Panc1 (cell line): ENCODE measurements at regions of chr7 and their contacts with region 1.

Region 1: GRCh38 chr7:69561266-69562000 is 36.8 kb upstream of the AUTS2 start:
- DNase-seq: no peak
- ATAC-seq: no peak
- H3K4me3 ChIP-seq: no peak overlapping the region
- H3K27ac ChIP-seq: no peak overlapping the region
- H3K4me1 ChIP-seq: no peaks in the 10 kb centered on the region
- H3K27me3 ChIP-seq: no peaks in the 10 kb centered on the region
- CTCF ChIP-seq: no peak

Region 2: DNA sequence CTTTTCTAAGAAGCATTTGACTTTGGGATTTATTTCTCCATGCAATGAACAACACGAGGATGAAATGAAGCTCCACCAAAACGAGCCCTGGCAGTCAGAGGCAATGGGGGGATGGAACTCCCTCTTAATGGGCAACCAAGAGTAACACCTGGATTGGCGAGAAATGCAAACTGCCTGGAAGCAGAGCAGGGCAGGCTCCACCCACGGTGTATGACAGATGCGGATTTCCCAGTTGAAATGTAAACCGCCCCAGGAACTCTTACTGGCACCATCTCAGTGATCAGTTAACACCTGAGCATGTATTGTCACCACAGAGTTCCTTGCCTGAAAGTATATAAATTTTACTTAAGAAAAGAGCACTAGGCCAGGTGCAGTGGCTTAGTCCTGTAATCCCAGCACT is 10.4 kb before region 1 on chr7:
- CTCF ChIA-PET with region 1: interaction called, 13 read pairs
- POLR2A ChIA-PET with region 1: no interaction called
- in situ Hi-C with region 1: no loop called
- intact Hi-C with region 1: no loop called
- DNase-seq: no peak
- ATAC-seq: no peak
- H3K4me3 ChIP-seq: no peak overlapping the region
- H3K27ac ChIP-seq: no peak overlapping the region
- H3K4me1 ChIP-seq: no peaks in the 10 kb centered on the region
- H3K27me3 ChIP-seq: no peaks in the 10 kb centered on the region
- CTCF ChIP-seq: no peak